HepG2 (cell line): ENCODE measurements at regions of chr13 and their contacts with region 1.

Region 1: GRCh38 chr13:34076943-34077703 is 259.2 kb downstream of the RFC3 start:
- DNase-seq: peak; percentile 16
- ATAC-seq: peak; percentile 52; the same call in 2 of the 3 replicates
- H3K4me3 ChIP-seq: no peak overlapping the region
- H3K27ac ChIP-seq: no peak overlapping the region
- H3K4me1 ChIP-seq: peaks cover 16% of the 10 kb centered on the region
- H3K27me3 ChIP-seq: no peaks in the 10 kb centered on the region
- CTCF ChIP-seq: peak; percentile 76
- EP300 ChIP-seq: no peak
- POLR2A ChIP-seq: no peak
- RAD21 ChIP-seq: peak; percentile 88

Region 2: GRCh38 chr13:33799950-33800592 is 277.1 kb before region 1 on chr13:
- CTCF ChIA-PET with region 1: no interaction called
- POLR2A ChIA-PET with region 1: no interaction called
- in situ Hi-C with region 1: no loop called
- intact Hi-C with region 1: loop called (anchors 5 kb)
- DNase-seq: peak; percentile 38
- ATAC-seq: peak; percentile 79
- H3K4me3 ChIP-seq: no peak overlapping the region
- H3K27ac ChIP-seq: no peak overlapping the region
- H3K4me1 ChIP-seq: peaks cover 13% of the 10 kb centered on the region; the same call in 1 of the 2 replicates
- H3K27me3 ChIP-seq: no peaks in the 10 kb centered on the region
- CTCF ChIP-seq: peak; percentile 64
- EP300 ChIP-seq: no peak
- POLR2A ChIP-seq: no peak
- RAD21 ChIP-seq: no peak

Region 3: DNA sequence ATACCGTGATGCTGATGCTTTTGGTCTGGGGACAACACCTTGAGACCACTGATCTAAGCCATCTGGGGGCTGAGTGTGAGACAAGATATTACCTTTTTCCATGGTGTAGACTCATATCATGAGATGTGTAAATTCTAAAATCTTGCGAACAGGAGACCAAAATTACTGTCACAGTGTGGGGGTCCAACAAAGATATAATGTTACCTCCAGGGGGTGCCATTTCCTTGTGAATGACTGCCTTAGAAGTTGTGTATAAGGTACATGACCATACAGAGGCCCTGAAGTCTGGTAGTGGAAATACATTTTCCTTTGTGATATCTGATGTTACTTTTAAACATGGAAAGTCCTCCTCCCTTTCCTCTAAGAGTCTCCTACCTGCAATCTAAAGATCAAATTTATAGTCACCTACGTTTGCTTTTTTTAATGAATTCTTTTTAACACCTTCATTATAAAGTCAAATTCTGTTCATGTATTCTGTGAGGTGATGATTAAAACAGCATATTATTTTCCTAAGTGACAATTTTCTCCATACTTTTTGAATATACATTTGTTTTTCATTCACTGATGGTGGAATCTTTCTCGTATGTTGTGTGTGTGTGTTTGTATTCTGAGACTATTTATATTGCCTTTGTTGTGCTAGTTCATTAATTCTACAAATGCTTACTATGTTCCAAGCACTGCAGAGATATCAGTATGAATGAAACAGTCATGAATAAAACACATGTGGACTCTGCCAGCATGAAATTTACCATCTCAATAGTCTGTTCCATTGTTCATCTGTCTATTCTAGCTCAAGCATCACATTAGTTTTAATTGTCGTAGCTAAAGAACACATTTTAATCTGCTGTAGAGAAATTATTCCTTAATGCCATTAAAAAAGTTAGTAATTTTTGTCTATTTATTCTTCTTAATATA is 145.5 kb before region 1 on chr13:
- CTCF ChIA-PET with region 1: interaction called, 64 read pairs
- POLR2A ChIA-PET with region 1: no interaction called
- in situ Hi-C with region 1: loop called (anchors 5 kb)
- intact Hi-C with region 1: loop called (anchors 1 kb)
- DNase-seq: peak; percentile 65
- ATAC-seq: peak; percentile 96
- H3K4me3 ChIP-seq: no peak overlapping the region
- H3K27ac ChIP-seq: no peak overlapping the region
- H3K4me1 ChIP-seq: peaks cover 4% of the 10 kb centered on the region
- H3K27me3 ChIP-seq: no peaks in the 10 kb centered on the region
- CTCF ChIP-seq: peak; percentile 64
- EP300 ChIP-seq: no peak
- POLR2A ChIP-seq: no peak
- RAD21 ChIP-seq: peak; percentile 88

Region 4: DNA sequence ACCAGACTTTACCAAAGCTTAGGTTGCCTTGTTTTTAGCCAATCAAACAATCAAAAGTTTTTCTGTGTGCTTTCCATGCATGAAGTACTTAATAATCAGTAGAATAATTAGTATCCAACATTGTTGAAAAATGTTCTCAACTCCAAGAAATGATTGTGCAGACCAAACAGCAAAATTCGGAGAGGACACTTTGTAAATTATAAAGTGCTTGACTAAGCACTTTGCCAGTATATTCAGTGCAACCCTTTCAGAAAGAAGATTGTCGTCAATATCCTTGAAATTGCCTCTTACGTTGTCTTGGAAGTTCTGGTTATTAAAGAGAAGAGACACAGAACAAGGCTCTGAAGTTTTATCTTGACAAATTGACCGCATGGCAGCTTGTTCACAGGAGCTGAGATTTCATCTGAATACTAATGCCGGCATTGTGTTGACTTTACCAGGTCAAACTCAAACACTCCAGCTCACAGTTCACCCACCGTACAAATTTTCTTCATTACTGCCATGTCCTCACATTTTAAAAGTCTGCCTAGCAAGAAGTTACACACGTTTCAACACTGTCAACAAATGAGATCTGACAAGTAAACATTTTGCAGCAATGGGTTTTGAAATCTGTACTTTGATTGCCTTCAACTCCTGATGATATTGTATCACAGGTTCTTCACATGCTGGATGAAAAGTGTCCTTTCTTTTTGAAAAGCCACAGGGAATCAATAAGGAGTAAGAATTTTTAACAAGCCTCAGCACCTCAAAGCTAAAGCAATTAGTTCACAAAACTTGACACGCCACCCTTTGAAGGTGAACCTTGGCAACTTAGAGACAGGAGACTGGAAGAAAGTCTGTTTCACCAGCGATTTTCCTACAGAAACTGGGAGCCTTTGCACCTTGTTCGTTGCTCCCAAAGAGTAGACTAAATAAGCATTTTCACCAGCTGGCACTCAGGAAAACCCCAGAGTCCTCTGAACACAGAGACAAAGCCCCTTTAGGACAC is 108.3 kb before region 1 on chr13:
- CTCF ChIA-PET with region 1: no interaction called
- POLR2A ChIA-PET with region 1: no interaction called
- in situ Hi-C with region 1: no loop called
- intact Hi-C with region 1: loop called (anchors 1 kb)
- DNase-seq: peak; percentile 96
- ATAC-seq: peak; percentile 97
- H3K4me3 ChIP-seq: peak overlapping the region; percentile 28 to 45 (median 40); a peak in 5 of 6 replicates
- H3K27ac ChIP-seq: peak overlapping the region; percentile 97
- H3K4me1 ChIP-seq: peaks cover 45% of the 10 kb centered on the region
- H3K27me3 ChIP-seq: no peaks in the 10 kb centered on the region
- CTCF ChIP-seq: no peak
- EP300 ChIP-seq: peak; percentile 83 to 98
- POLR2A ChIP-seq: no peak
- RAD21 ChIP-seq: no peak

Region 5: GRCh38 chr13:34011541-34012085 is 65.5 kb before region 1 on chr13:
- CTCF ChIA-PET with region 1: no interaction called
- POLR2A ChIA-PET with region 1: no interaction called
- in situ Hi-C with region 1: no loop called
- intact Hi-C with region 1: loop called (anchors 1 kb)
- DNase-seq: peak; percentile 96
- ATAC-seq: peak; percentile 100
- H3K4me3 ChIP-seq: peak overlapping the region in 1 of 3 experiments; percentile 42; a peak in 3 of 6 replicates
- H3K27ac ChIP-seq: peak overlapping the region; percentile 84
- H3K4me1 ChIP-seq: peaks cover 59% of the 10 kb centered on the region
- H3K27me3 ChIP-seq: no peaks in the 10 kb centered on the region
- CTCF ChIP-seq: 0 out of 2 replicates have a peak, but pooled peaks have one; percentile 13
- EP300 ChIP-seq: peak; percentile 61 to 85
- POLR2A ChIP-seq: peak; percentile 63 to 67; a peak in 2 of 4 replicates
- RAD21 ChIP-seq: peak; percentile 62; the same call in 1 of the 2 replicates

Region 6: GRCh38 chr13:35157143-35157755 is 1080.1 kb after region 1 on chr13:
- CTCF ChIA-PET with region 1: no interaction called
- POLR2A ChIA-PET with region 1: no interaction called
- in situ Hi-C with region 1: loop called (anchors 25 kb)
- intact Hi-C with region 1: loop called (anchors 5 kb)
- DNase-seq: peak; percentile 31
- ATAC-seq: peak; percentile 46; the same call in 2 of the 3 replicates
- H3K4me3 ChIP-seq: no peak overlapping the region
- H3K27ac ChIP-seq: no peak overlapping the region
- H3K4me1 ChIP-seq: no peaks in the 10 kb centered on the region
- H3K27me3 ChIP-seq: no peaks in the 10 kb centered on the region
- CTCF ChIP-seq: peak; percentile 73
- EP300 ChIP-seq: no peak
- POLR2A ChIP-seq: no peak
- RAD21 ChIP-seq: peak; percentile 55; the same call in 1 of the 2 replicates

Region 7: DNA sequence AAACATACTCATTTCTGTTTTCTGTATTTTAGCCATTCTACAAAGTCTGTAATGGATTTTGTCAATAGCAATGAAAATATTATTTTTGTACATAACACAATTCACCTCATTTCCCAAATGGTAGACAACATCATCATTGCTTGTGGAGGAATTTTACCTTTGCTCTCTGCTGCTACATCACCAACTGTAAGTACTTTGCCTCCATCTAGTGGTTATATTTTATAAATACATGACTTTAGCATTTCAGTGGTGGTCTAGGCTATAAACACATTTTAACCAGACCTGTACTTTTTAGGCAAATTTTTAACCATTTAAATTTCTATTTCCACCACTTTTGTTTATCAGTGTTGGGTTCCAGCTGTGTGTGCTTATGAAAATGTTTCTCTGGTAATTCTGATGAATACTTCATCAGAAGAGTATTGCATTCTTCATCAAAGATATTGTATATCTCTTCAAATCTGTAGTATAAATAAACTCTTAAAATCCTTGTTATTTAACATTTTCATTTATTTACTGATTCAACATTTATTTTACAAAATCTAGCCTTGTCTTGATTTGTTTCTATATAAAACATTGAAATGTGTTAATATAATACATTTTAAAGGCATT is 1087.3 kb after region 1 on chr13:
- CTCF ChIA-PET with region 1: no interaction called
- POLR2A ChIA-PET with region 1: no interaction called
- in situ Hi-C with region 1: loop called (anchors 25 kb)
- intact Hi-C with region 1: loop called (anchors 5 kb)
- DNase-seq: peak; percentile 20
- ATAC-seq: peak; percentile 80
- H3K4me3 ChIP-seq: no peak overlapping the region
- H3K27ac ChIP-seq: no peak overlapping the region
- H3K4me1 ChIP-seq: no peaks in the 10 kb centered on the region
- H3K27me3 ChIP-seq: no peaks in the 10 kb centered on the region
- CTCF ChIP-seq: peak; percentile 68
- EP300 ChIP-seq: no peak
- POLR2A ChIP-seq: no peak
- RAD21 ChIP-seq: peak; percentile 54; the same call in 1 of the 2 replicates